ENCODE measurements at regions of chr4 and their contacts with region 1.

Region 1: GRCh38 chr4:38675146-38676121 is 11.4 kb downstream of the KLF3 start:
- DNase-seq: peak; percentile 46 to 94 (median 78)
- H3K4me3 ChIP-seq: peak overlapping the region in 9 of 59 donors; percentile 9 to 42 (median 21)
- H3K27ac ChIP-seq: peak overlapping the region in 57 of 59 donors; percentile 22 to 100 (median 97)
- H3K27me3 ChIP-seq: no peaks in the 10 kb centered on the region
- CTCF ChIP-seq: peak; percentile 83 to 99 (median 94)

Region 2: DNA sequence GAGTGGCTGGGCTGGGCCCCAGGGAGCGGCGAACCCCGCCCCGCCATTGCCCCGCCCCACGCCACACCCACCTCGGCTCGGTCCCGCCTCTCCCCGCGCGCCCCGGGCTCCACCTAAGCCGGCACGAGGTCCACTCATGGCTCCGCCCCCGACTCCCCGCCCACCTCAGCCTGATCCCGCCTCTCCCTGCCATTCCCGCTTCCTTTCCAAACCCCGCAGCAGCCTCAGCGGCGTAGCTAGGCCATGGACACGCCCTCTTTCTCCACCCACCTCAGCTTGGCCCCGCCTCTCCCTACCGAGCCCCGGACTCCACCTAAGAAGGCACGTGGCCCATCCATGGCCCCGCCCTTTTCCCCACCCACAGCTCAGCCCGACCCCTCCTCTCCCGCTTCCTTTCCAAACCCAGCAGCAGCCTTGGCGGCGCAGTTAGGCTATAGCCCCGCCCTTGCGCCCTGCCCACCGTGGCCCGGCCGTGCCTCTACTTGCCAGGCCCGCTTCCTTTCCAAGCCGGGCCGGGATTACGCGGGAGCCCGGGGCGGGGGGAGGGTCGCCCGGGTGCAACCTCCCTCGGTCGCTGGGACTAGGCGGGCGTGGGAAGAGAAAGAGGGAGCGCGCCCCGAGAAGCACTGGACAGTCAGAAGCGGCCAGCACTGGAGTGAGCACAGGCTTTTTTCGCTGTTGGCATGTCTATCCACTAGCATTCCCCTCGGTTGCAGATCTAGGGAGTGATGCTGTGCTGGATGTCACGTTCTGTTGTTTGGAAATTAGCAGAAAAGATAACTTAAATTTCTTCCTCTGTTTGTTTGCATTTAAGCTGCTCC is 988.9 kb before region 1 on chr4 and contains the start of gene RELL1:
- intact Hi-C with region 1: loop called in 1 of 2 experiments (anchors 10 kb)
- DNase-seq: peak; percentile 98 to 100 (median 99)
- H3K4me3 ChIP-seq: peak within 1 kb of the TSS; percentile 66 to 98 (median 91)
- H3K27ac ChIP-seq: peak within 1 kb of the TSS; percentile 50 to 95 (median 89)
- H3K27me3 ChIP-seq: no peaks in the 10 kb centered on the region
- CTCF ChIP-seq: peak in 14 of 56 donors; percentile 5 to 49 (median 18)
- total RNA-seq, gene RELL1: 9.3 to 58.1 (median 21.9) TPM

Region 3: GRCh38 chr4:38062088-38062893 is 613.1 kb before region 1 on chr4:
- intact Hi-C with region 1: loop called (anchors 5 kb)
- DNase-seq: peak; percentile 59 to 85 (median 74)
- H3K4me3 ChIP-seq: peak overlapping the region in 56 of 59 donors; percentile 11 to 65 (median 43)
- H3K27ac ChIP-seq: peak overlapping the region in 20 of 59 donors; percentile 1 to 67 (median 40)
- H3K27me3 ChIP-seq: no peaks in the 10 kb centered on the region
- CTCF ChIP-seq: peak; percentile 80 to 97 (median 91)

Region 4: GRCh38 chr4:38190717-38191178 is 484.7 kb before region 1 on chr4:
- intact Hi-C with region 1: no loop called
- DNase-seq: peak in 1 of 10 donors; percentile 48
- H3K4me3 ChIP-seq: no peak overlapping the region
- H3K27ac ChIP-seq: peak overlapping the region in 58 of 59 donors; percentile 17 to 90 (median 80)
- H3K27me3 ChIP-seq: no peaks in the 10 kb centered on the region
- CTCF ChIP-seq: no peak

Region 5: DNA sequence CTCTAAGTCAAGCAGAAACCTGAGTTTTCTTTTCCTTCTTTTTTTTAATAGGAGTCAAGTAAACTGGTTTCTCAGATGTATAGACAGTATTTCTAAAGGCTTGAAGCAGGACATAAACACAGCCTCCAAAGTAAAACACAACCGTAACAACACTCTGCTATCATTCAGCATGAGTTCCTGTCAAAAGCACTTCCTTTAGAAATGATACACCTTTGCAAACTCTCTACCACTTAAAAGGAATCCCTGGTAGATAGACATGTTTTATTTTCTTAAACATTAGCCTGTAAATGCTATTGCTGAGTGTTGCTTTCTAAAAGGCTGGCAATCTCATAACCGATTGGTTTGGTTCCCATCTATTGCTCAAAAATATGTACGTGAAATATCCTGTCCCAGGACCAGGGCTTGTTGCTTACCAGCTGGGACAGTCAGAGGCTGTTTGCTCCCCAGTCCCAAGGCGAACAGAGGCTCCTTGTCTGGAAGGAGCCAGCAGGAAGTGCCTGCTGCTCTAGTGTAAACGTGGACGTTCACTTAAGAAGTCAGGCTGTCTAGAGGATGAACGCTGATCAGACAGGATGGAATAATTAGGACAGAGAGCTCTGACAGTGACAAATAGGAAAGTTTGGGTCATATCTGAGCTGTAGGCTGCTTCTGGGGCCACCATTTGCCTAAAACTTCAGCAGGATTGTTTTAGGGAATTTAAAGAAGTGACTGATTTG is 185.4 kb before region 1 on chr4:
- intact Hi-C with region 1: loop called in 1 of 2 experiments (anchors 10 kb)
- DNase-seq: peak in 1 of 10 donors; percentile 11
- H3K4me3 ChIP-seq: peak overlapping the region in 3 of 59 donors; percentile 2 to 10 (median 4)
- H3K27ac ChIP-seq: peak overlapping the region in 32 of 59 donors; percentile 0 to 66 (median 36)
- H3K27me3 ChIP-seq: no peaks in the 10 kb centered on the region
- CTCF ChIP-seq: no peak

Region 6: DNA sequence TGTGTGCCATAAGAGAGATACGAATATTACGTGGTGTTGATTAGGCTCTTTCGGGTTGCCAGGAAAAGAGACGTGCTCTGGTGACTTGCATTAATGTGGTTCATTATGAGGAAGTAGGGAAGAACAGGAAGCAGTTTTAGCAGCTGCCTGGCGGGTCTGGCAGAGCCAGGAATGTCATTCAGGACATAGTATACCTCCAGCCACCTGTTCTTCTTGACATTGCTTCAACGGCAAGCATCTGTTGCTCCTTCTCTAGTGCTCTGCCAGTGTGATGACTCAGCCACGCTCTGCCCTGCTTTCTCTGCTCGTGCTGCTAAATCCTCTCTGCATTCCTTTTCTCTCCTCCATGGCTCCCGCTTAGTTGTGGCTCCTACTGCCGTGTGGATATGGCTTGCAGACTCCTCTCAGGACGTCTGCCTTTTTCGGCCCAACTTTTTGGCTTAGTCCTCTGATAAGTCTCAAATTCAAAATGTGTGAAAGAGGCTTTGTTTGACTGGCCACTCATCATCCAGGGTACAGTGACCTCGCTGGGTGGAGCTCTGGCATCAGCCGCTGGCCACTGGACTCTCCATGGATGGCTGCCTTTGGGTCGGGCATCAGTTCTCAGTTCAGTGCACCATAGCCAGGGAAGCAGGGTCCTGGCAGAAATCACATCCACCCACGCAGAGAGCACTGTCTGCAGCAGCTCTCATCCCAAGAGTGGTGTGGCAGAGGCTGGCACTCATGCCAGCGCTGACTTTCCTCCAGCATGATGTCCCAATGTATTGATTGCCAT is 100.7 kb before region 1 on chr4:
- intact Hi-C with region 1: loop called in 1 of 2 experiments (anchors 2 kb)
- DNase-seq: peak; percentile 37 to 72 (median 60)
- H3K4me3 ChIP-seq: peak overlapping the region in 52 of 59 donors; percentile 13 to 63 (median 41)
- H3K27ac ChIP-seq: peak overlapping the region in 44 of 59 donors; percentile 1 to 83 (median 55)
- H3K27me3 ChIP-seq: no peaks in the 10 kb centered on the region
- CTCF ChIP-seq: peak in 36 of 56 donors; percentile 6 to 62 (median 30)

Region 7: DNA sequence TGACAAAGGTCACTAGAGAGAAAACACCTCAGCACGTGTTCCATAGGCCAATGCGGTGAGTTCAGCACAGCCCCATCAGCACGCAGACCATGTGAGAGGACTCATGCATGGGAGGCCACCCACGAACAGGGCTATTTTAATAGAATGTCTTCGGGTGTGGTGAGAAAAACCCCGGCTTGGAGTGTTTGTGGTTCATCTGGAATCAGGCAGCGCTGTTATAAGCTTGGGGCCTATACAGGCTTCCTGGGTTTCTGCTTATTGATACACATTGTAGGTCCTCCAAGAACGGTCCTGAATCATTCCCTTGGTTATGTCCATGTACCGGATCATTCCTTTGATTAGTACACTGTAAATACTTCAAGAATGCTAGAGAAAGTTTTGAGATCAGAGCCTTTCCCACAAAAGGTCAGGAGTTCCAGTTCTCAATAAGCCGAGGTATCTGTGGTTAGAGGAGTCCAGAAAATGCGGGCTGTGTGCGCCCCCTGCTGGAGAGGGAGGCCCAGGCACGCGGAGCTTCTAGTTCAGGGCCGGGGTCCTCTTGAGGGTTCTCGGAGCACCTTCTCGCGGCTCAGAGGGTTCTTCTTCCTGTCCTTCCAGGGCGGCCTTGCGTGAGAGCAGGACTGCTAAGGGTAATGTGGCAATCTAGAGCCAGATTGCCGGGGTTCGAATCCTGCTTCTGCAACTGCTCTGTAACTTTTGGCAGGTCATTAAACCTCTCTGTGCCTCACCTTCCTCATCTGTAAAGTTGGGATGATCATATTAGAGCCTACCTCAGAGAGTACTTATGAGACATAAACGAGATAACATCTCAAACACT is 55.6 kb after region 1 on chr4:
- intact Hi-C with region 1: loop called in 1 of 2 experiments (anchors 5 kb)
- DNase-seq: peak; percentile 30 to 91 (median 78)
- H3K4me3 ChIP-seq: no peak overlapping the region
- H3K27ac ChIP-seq: no peak overlapping the region
- H3K27me3 ChIP-seq: no peaks in the 10 kb centered on the region
- CTCF ChIP-seq: peak; percentile 78 to 99 (median 94)

Measured in dorsolateral prefrontal cortex (tissue), 120 donors.